SK-N-SH (cell line): ENCODE measurements at regions of chr14 and their contacts with region 1.

Region 1: DNA sequence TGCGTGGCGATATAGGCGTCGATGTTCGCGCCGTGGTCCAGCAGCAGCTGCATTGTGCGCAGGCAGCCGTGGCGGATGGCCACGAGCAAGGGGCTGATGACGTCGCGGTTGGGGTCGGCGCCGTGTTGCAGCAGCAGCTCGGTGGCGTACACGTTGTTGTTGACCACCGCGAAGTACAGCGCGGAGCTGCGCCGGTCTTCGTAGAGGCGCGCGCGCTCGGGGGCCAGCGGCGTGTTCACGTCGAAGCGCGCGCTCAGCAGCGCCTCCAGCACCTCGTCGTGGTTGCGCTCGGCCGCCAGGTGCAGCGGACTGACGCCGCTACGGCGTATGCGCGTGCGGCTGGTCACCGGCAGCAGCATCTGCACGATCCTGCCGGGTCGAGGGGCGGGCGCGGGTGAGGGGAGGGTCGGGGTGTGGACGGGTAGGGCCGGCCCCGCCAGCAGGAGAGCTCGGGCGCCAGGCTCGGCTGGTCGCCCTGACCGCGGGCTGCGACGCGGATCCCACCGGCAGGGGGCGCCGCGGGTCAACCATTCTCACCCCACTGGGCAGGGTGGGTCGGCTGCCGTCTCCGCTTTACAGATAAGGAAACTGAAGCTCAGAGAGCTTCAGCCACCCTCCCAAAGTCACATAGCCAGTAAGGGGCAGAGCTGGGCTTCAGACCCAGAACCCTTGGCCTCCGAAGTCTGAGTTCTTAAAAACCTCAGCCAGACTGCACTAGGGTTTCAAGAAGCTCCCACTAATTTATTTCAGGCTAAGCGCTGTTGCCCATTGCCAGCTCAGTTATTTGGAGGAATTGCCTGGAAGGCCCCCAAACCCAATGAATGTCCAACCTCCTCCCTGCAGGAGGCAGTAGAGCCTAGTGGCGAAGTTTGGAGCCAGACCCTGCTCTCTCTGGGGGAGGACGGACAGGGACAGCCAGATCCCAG is 12.4 kb downstream of the FAM181A start:
- DNase-seq: peak; percentile 96
- H3K4me3 ChIP-seq: peak overlapping the region; percentile 39 to 51
- H3K27ac ChIP-seq: no peak overlapping the region
- H3K4me1 ChIP-seq: peaks cover 9 to 18% of the 10 kb centered on the region in 2 experiments; a peak in 3 of 4 replicates
- H3K27me3 ChIP-seq: peaks cover 39% of the 10 kb centered on the region
- CTCF ChIP-seq: peak; percentile 77
- EP300 ChIP-seq: no peak
- RAD21 ChIP-seq: peak; percentile 83

Region 2: GRCh38 chr14:93906341-93907329 is 32.9 kb before region 1 on chr14:
- CTCF ChIA-PET with region 1: interaction called, 11 read pairs
- POLR2A ChIA-PET with region 1: no interaction called
- DNase-seq: peak; percentile 77
- H3K4me3 ChIP-seq: no peak overlapping the region
- H3K27ac ChIP-seq: no peak overlapping the region
- H3K4me1 ChIP-seq: peaks cover 0 to 7% of the 10 kb centered on the region in 2 experiments; a peak in 1 of 4 replicates
- H3K27me3 ChIP-seq: no peaks in the 10 kb centered on the region
- CTCF ChIP-seq: peak; percentile 59
- EP300 ChIP-seq: no peak
- RAD21 ChIP-seq: peak; percentile 84

Region 3: DNA sequence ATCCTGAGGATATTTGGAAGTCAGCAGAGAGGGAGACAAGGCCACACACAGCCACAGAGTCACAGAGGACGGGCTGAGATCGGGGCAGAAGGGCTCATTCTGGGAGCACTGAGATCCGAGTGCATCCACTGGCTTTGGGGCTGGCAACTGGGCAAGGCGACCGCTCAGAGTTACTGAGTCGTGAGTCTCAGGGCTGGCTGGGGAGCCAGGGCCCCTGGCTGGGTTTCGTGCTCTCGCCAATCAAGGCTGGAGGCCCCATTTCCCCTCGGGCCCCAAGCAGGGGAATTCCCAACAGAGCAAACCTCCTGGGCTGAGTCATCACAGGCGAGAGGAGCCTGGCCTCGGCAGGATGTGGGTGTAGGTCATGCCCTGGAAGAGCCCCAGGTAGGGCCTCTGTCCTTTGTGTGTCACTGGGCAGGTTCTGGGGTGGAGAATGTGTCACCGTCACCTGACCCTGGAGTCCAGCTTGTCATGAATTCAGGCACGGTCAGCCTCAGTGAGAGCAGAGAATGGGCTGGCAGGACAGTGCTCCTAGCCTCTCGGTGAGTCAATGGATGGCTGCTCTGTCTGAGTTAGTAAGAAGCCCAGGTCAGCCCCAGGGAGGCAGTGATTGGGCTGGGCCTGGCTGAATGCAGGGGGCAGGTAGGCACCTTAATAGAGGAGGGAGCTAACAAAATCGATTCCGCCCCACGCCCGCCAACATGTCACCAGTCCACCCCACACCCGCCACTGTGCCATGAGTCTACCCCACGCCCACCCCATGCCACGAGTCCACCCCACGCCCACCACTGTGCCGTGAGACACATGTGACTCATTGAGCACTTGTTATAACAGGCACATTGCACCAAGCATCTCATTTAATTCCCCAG is 19.9 kb after region 1 on chr14:
- CTCF ChIA-PET with region 1: interaction called, 28 read pairs
- POLR2A ChIA-PET with region 1: no interaction called
- DNase-seq: no peak
- H3K4me3 ChIP-seq: no peak overlapping the region
- H3K27ac ChIP-seq: peak overlapping the region in 1 of 2 experiments; percentile 88; a peak in 2 of 4 replicates
- H3K4me1 ChIP-seq: peaks cover 3 to 16% of the 10 kb centered on the region in 2 experiments; a peak in 2 of 4 replicates
- H3K27me3 ChIP-seq: no peaks in the 10 kb centered on the region
- CTCF ChIP-seq: no peak
- EP300 ChIP-seq: peak in 1 of 2 experiments; percentile 88; a peak in 1 of 4 replicates
- RAD21 ChIP-seq: no peak

Region 4: GRCh38 chr14:93991212-93991611 is 51.6 kb after region 1 on chr14:
- CTCF ChIA-PET with region 1: interaction called, 219 read pairs
- POLR2A ChIA-PET with region 1: no interaction called
- DNase-seq: no peak
- H3K4me3 ChIP-seq: no peak overlapping the region
- H3K27ac ChIP-seq: no peak overlapping the region
- H3K4me1 ChIP-seq: peaks cover 7 to 11% of the 10 kb centered on the region in 2 experiments; a peak in 3 of 4 replicates
- H3K27me3 ChIP-seq: no peaks in the 10 kb centered on the region
- CTCF ChIP-seq: no peak
- EP300 ChIP-seq: no peak
- RAD21 ChIP-seq: no peak

Region 5: GRCh38 chr14:94028450-94028826 is 88.9 kb after region 1 on chr14:
- CTCF ChIA-PET with region 1: interaction called, 10 read pairs
- POLR2A ChIA-PET with region 1: no interaction called
- DNase-seq: no peak
- H3K4me3 ChIP-seq: no peak overlapping the region
- H3K27ac ChIP-seq: no peak overlapping the region
- H3K4me1 ChIP-seq: peaks cover 0 to 10% of the 10 kb centered on the region in 2 experiments; a peak in 1 of 4 replicates
- H3K27me3 ChIP-seq: no peaks in the 10 kb centered on the region
- CTCF ChIP-seq: no peak
- EP300 ChIP-seq: no peak
- RAD21 ChIP-seq: no peak

Region 6: GRCh38 chr14:94143239-94143638 is 203.7 kb after region 1 on chr14:
- CTCF ChIA-PET with region 1: interaction called, 13 read pairs
- POLR2A ChIA-PET with region 1: no interaction called
- DNase-seq: no peak
- H3K4me3 ChIP-seq: no peak overlapping the region
- H3K27ac ChIP-seq: no peak overlapping the region
- H3K4me1 ChIP-seq: no peaks in the 10 kb centered on the region
- H3K27me3 ChIP-seq: no peaks in the 10 kb centered on the region
- CTCF ChIP-seq: peak; percentile 35; the same call in 1 of the 2 replicates
- EP300 ChIP-seq: no peak
- RAD21 ChIP-seq: peak; percentile 37